PC-3 (cell line): ENCODE measurements at regions of chrX and their contacts with region 1.

Region 1: DNA sequence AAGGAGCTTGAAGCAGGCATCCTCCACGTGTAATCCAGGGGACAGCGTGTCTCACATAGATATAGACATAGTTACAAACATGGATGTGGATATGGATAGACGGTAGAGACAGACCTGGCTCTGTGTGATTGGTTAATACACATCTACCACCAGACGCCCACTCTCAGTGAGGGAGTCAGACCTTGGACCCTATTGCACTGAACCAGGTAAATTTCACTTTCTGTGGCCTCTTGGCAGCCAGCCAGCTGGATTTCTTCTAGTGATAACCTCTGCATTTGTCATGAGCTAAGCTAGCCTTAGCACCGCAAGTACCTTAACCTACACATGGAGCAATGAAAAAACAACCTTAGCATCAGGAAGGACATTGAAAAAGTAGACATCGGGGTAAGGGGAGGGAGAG is 79.2 kb upstream of the ACSL4 start:
- DNase-seq: no peak
- ATAC-seq: no peak
- H3K4me3 ChIP-seq: no peak overlapping the region
- H3K27ac ChIP-seq: no peak overlapping the region
- H3K4me1 ChIP-seq: peaks cover 6% of the 10 kb centered on the region; the same call in 1 of the 2 replicates
- H3K27me3 ChIP-seq: no peaks in the 10 kb centered on the region
- CTCF ChIP-seq: no peak

Region 2: DNA sequence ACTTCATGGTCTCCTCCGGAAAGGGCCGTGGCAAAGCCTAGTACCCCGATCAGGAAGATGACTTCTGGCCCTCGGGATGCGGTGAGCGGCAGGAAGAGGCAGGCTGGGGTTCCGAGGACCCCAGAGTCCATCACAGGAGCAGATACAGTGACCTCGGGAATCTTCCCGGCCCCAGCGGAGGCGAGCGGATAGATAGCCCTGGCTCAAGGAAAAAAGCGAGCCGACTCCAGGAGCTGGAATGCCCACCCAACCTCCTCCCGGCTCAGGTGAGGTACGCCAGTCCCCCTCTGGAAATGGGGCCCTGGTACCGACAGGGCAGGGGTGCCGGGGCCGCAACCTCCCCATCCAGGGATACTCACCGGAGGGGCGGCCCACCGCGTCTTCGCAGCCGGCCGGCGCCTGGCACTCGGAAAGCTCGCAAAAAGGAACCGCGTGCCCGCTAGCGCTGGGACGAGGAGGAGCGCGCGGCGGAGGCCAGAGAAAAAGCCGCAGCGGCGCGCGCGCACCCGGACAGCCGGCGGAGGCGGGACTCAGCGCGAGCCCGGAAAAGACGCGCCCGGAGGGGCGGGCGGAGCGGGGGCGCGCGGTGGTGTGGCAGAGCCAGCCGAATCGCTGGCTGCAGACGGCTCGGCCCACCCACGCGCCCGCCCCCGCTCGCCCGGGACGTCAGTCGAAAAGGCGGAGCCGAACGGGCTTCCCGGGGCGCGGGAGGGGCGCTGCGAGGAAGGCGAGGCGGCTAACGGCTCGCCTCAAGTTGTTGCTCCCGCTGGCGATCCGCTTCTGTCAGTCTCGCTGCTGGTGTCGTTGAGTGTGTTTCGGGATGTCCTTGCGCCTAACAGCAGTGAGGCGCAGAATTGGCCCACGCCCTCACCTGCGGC is 79.2 kb before region 1 on chrX and contains the start of gene ACSL4:
- CTCF ChIA-PET with region 1: no interaction called
- POLR2A ChIA-PET with region 1: no interaction called
- intact Hi-C with region 1: no loop called
- DNase-seq: peak; percentile 89
- ATAC-seq: peak; percentile 93
- H3K4me3 ChIP-seq: peak within 1 kb of the TSS; percentile 77
- H3K27ac ChIP-seq: peak within 1 kb of the TSS; percentile 0; the same call in 1 of the 2 replicates
- H3K4me1 ChIP-seq: peaks cover 20% of the 10 kb centered on the region
- H3K27me3 ChIP-seq: no peaks in the 10 kb centered on the region
- CTCF ChIP-seq: no peak
- total RNA-seq, gene ACSL4: 41.7 and 53.1 TPM in 2 replicates

Region 3: DNA sequence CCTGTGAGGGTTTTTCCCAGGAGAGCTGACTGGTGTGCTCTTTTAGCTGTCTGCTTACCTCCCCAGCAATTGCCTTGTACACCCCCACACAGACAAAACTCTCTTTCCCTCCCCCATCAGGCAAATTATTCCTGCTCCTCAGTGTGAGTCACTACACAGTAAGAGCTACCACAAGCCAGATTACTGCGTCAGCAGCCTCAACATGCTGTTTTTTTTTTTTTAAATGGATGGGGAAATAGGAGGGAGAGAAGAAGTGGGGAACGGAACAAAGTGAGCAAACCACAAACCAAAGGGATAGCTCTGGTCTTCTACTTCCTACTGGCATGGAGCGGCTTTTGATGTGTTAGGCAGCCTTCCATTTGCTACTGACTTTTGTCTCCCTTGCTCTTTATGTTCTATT is 28.3 kb after region 1 on chrX:
- CTCF ChIA-PET with region 1: no interaction called
- POLR2A ChIA-PET with region 1: interaction called, 11 read pairs
- intact Hi-C with region 1: no loop called
- DNase-seq: peak; percentile 81
- ATAC-seq: peak; percentile 88
- H3K4me3 ChIP-seq: no peak overlapping the region
- H3K27ac ChIP-seq: peak overlapping the region; percentile 49
- H3K4me1 ChIP-seq: peaks cover 18% of the 10 kb centered on the region
- H3K27me3 ChIP-seq: no peaks in the 10 kb centered on the region
- CTCF ChIP-seq: no peak

Region 4: DNA sequence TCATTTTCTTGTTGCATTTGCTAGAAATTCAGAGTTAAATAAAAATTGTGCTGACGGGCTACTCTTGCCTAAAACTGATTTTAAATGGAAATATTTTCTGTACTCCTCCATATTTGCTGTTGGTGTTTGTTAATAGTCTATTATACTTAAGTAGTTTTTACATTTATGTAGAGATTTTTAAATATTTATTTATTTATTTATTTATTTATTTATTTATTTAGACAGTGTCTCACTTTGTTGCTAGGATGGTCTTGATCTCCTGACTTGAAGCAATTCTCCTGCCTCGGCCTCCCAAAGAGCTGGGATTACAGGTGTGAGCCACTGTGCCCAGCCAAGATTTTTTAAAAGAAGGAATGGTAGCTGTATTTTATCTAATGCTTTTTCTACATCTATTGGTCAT is 258.7 kb after region 1 on chrX:
- CTCF ChIA-PET with region 1: no interaction called
- POLR2A ChIA-PET with region 1: no interaction called
- intact Hi-C with region 1: no loop called
- DNase-seq: no peak
- ATAC-seq: no peak
- H3K4me3 ChIP-seq: no peak overlapping the region
- H3K27ac ChIP-seq: no peak overlapping the region
- H3K4me1 ChIP-seq: no peaks in the 10 kb centered on the region
- H3K27me3 ChIP-seq: no peaks in the 10 kb centered on the region
- CTCF ChIP-seq: no peak